Mammary epithelial cell (primary cell): ENCODE measurements at regions of chr4 and their contacts with region 1.

Region 1: DNA sequence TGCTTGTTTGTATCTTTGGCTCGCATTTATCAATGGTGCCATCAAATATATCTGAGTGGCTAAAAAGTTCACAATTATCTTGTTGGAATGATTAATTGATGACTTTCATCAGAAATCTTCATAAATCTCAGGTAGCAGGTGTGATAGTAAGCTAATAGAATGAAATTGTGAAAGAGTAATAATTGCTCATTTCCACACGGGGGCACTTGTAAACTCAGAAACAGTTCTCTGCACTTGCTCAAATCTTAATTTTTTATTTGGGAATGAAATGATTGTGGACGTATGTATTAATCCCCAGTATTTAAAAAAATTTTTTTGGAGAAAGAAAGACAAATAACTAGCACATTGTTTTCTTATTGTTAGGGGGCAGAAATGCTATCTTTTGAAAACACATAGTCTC is 132.8 kb downstream of the DTHD1 start:
- DNase-seq: no peak
- H3K4me3 ChIP-seq: no peak overlapping the region
- H3K27ac ChIP-seq: no peak overlapping the region
- H3K4me1 ChIP-seq: no peaks in the 10 kb centered on the region
- H3K27me3 ChIP-seq: no peaks in the 10 kb centered on the region
- CTCF ChIP-seq: peak in 1 of 2 donors; percentile 55

Region 2: DNA sequence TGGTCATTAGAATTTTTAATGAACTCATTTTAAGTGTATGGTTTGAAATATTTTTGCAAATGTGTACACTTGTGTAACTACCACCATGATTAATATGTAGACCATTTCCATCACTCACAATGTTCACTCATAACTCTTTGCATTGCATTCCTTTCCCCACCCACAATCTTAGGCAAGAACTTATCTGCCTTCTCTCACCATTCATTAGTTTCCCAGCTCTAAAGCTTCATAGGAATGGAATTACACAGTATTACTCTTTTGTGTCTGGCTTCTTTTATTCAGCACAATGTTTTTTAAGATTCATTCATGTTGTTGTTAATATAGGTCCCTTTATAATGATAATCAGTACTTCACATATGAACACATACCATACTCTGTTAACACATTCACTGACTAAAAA is 276.0 kb before region 1 on chr4:
- CTCF ChIA-PET with region 1: no interaction called
- dilution Hi-C with region 1: no loop called
- in situ Hi-C with region 1: no loop called
- intact Hi-C with region 1: no loop called
- DNase-seq: peak; percentile 70
- H3K4me3 ChIP-seq: no peak overlapping the region
- H3K27ac ChIP-seq: peak overlapping the region; percentile 2
- H3K4me1 ChIP-seq: peaks cover 3% of the 10 kb centered on the region
- H3K27me3 ChIP-seq: no peaks in the 10 kb centered on the region
- CTCF ChIP-seq: no peak

Region 3: DNA sequence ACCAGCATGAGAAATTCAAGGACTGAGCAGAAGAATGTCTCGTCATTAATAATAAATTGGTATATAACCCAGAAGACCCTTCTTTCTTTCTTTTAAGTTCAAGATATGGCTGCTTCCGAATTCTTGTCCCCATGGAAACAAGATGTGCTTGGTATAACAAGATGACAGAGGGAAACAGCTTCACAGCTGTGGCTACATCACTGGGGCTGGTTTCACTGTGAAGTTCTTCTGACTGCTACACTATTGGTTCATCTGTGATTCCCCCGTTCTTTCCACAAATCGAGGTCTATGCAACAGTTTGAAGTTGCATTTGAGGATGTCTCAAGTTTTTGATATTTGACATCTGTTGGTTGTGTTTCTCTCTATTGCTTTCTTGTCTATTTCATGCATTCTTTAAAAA is 145.1 kb before region 1 on chr4:
- CTCF ChIA-PET with region 1: no interaction called
- dilution Hi-C with region 1: no loop called
- in situ Hi-C with region 1: no loop called
- intact Hi-C with region 1: no loop called
- DNase-seq: no peak
- H3K4me3 ChIP-seq: no peak overlapping the region
- H3K27ac ChIP-seq: no peak overlapping the region
- H3K4me1 ChIP-seq: no peaks in the 10 kb centered on the region
- H3K27me3 ChIP-seq: no peaks in the 10 kb centered on the region
- CTCF ChIP-seq: no peak

Region 4: GRCh38 chr4:37383579-37384229 is 969.5 kb after region 1 on chr4:
- CTCF ChIA-PET with region 1: no interaction called
- dilution Hi-C with region 1: no loop called
- in situ Hi-C with region 1: loop called in 1 of 2 experiments (anchors 25 kb)
- intact Hi-C with region 1: loop called (anchors 1 kb)
- DNase-seq: peak; percentile 16
- H3K4me3 ChIP-seq: no peak overlapping the region
- H3K27ac ChIP-seq: no peak overlapping the region
- H3K4me1 ChIP-seq: no peaks in the 10 kb centered on the region
- H3K27me3 ChIP-seq: no peaks in the 10 kb centered on the region
- CTCF ChIP-seq: peak; percentile 45 to 63